Right cardiac atrium (tissue), 5 donors: ENCODE measurements at regions of chr12 and their contacts with region 1.

Region 1: GRCh38 chr12:88153959-88154358 is 11.9 kb downstream of the TMTC3 start:
- DNase-seq: no peak
- ATAC-seq: no peak
- H3K4me3 ChIP-seq: no peak overlapping the region
- H3K27ac ChIP-seq: no peak overlapping the region
- H3K4me1 ChIP-seq: no peaks in the 10 kb centered on the region
- H3K27me3 ChIP-seq: no peaks in the 10 kb centered on the region

Region 2: GRCh38 chr12:87827638-87828264 is 326.2 kb before region 1 on chr12:
- intact Hi-C with region 1: no loop called
- DNase-seq: no peak
- ATAC-seq: no peak
- H3K4me3 ChIP-seq: no peak overlapping the region
- H3K27ac ChIP-seq: no peak overlapping the region
- H3K4me1 ChIP-seq: no peaks in the 10 kb centered on the region
- H3K27me3 ChIP-seq: no peaks in the 10 kb centered on the region

Region 3: DNA sequence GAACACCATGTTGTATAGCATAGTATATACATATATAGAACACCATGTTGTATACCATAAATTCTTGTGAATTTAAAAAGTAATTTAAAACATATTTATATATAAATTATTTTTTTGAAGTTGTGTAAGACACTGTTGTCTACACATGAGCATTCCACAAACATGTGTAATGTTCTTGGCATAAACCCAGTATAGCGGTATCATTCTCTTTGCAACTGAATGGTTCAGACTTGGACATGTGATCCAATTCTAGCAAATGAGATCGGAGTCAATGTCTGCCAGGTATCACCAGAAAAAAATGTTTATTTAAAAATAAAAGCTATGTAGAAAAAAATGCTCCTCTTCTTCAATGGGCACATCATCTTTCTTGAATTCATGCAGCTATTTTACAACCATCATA is 45.9 kb before region 1 on chr12:
- intact Hi-C with region 1: no loop called
- DNase-seq: no peak
- ATAC-seq: no peak
- H3K4me3 ChIP-seq: no peak overlapping the region
- H3K27ac ChIP-seq: no peak overlapping the region
- H3K4me1 ChIP-seq: no peaks in the 10 kb centered on the region
- H3K27me3 ChIP-seq: no peaks in the 10 kb centered on the region

Region 4: GRCh38 chr12:88993651-88994050 is 839.7 kb after region 1 on chr12:
- intact Hi-C with region 1: loop called in 2 of 4 experiments (anchors 5 to 10 kb)
- DNase-seq: no peak
- ATAC-seq: peak in 1 of 2 donors; percentile 41
- H3K4me3 ChIP-seq: no peak overlapping the region
- H3K27ac ChIP-seq: no peak overlapping the region
- H3K4me1 ChIP-seq: no peaks in the 10 kb centered on the region
- H3K27me3 ChIP-seq: no peaks in the 10 kb centered on the region